Naive thymus-derived CD4-positive, alpha-beta T cell (primary cell): ENCODE measurements at regions of chr4 and their contacts with region 1.

Region 1: DNA sequence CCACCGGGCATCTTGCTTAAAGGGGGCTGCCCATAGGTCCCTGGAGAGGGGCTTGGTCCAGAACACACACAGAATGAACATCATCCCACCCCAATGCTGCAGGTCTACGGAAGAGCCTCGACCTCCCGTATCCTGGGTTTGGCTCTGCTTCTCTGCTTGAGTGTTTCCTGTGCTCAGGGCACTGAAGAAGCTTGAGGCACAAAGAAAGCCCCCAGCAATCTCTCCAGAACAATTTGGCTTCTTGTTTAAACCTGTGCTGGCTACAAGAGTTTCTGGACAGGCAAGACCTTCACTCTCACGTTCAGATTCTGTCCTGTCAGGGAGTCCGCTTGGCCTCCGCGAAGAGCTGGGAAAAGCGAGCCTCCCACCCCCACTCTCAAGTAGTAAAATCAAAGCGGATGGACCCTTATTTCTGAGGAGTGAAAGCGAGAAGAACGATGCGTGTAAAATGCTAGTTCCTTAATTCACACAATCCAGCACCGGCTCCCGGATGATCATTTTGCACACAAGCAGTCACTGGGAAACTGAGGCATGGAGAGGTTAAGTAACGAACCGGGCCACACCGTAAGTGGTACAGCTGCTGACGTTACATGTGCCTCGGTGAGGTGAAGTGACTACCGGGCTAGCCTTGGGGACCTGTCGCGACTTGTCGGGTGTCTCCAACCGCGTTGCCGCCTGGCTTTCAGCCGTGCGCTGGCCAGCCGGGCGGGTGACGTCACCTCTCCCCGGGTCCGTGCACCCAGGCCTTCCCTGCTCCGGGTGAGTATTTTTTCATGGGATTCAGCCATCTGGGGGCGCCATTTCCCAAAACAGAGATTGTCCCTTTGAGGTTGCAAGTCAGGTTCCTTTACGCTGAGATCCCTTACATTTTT is 3.1 kb upstream of the SFRP2 start:
- DNase-seq: peak in 1 of 9 donors; percentile 22
- ATAC-seq: no peak
- H3K4me3 ChIP-seq: peak overlapping the region; percentile 38
- H3K4me3 Mint-ChIP-seq: peak overlapping the region; percentile 61 to 87 (median 80)
- H3K27ac ChIP-seq: no peak overlapping the region
- H3K27ac Mint-ChIP-seq: no peak overlapping the region
- H3K4me1 ChIP-seq: peaks cover 13 to 37% of the 10 kb centered on the region in 2 donors
- H3K4me1 Mint-ChIP-seq: peaks cover 21 to 62% (median 42%) of the 10 kb centered on the region in 7 donors
- H3K27me3 ChIP-seq: peaks cover 7 to 26% of the 10 kb centered on the region in 2 donors
- H3K27me3 Mint-ChIP-seq: peaks cover 67 to 95% (median 82%) of the 10 kb centered on the region in 5 donors

Region 2: GRCh38 chr4:153153339-153153871 is 638.6 kb before region 1 on chr4:
- CTCF ChIA-PET with region 1: no interaction called
- POLR2A ChIA-PET with region 1: no interaction called
- intact Hi-C with region 1: no loop called
- DNase-seq: peak; percentile 53 to 84 (median 78)
- ATAC-seq: peak; percentile 95
- H3K4me3 ChIP-seq: peak overlapping the region; percentile 81
- H3K4me3 Mint-ChIP-seq: peak overlapping the region; percentile 91 to 96 (median 92)
- H3K27ac ChIP-seq: peak overlapping the region; percentile 69
- H3K27ac Mint-ChIP-seq: peak overlapping the region; percentile 78 to 90 (median 85)
- H3K4me1 ChIP-seq: peaks cover 3 to 12% of the 10 kb centered on the region in 2 donors
- H3K4me1 Mint-ChIP-seq: peaks cover 23 to 42% (median 38%) of the 10 kb centered on the region in 7 donors
- H3K27me3 ChIP-seq: no peaks in the 10 kb centered on the region
- H3K27me3 Mint-ChIP-seq: peaks cover 0 to 43% (median 0%) of the 10 kb centered on the region in 5 donors

Region 3: DNA sequence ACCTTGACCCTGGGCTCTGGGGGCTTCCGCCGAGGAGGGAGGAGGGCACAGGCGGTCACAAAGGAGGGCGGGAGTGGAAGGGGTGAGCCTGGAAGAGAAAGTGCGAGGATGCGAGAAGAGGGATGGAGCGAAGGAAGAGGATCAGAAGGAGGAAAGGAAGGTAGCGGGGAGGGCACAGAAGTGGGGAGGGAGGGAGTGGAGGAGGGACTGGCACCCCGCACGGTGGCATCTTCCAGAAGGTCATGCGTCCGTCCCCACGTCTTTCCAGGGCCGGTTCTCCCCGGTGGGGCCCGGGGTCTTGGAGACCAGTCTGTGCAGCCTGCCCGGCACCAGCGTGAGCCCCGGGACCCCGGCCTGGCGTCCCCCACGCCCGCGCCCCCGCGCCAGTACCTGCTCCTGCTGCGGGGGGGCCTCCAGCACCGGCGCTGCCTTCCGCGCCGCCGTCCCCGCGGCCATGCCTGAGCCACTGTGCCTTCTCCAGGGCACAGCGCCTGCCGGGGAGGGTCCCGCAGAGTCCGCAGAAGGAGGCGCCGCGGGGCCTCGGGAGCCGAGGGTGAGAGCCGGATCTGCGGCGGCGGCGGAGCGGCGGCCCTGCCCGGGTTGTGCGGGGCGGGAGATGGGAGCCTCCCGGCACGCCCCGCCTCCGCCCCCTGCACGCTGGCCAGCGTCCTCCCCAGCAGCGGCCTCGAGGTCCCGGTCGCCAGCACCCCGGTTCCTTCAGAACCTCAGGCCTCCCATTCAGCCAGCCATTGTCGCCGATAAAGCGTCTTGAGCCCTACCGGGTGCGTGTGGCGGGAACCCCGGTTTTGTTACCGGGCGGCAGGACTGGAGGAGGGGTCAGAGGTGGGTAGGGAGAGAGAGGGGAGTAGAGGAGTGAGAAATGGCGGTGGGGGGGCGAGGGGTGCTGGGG is 32.3 kb before region 1 on chr4 and contains the start of gene RNF175:
- CTCF ChIA-PET with region 1: interaction called, 3 read pairs
- POLR2A ChIA-PET with region 1: no interaction called
- intact Hi-C with region 1: loop called in 1 of 2 experiments (anchors 2 kb)
- DNase-seq: peak in 8 of 9 donors; percentile 20 to 32 (median 29)
- ATAC-seq: peak; percentile 54
- H3K4me3 ChIP-seq: peak within 1 kb of the TSS; percentile 34
- H3K4me3 Mint-ChIP-seq: peak within 1 kb of the TSS; percentile 40 to 91 (median 84)
- H3K27ac ChIP-seq: peak within 1 kb of the TSS; percentile 54
- H3K27ac Mint-ChIP-seq: peak within 1 kb of the TSS in 8 of 9 donors; percentile 75 to 95 (median 90)
- H3K4me1 ChIP-seq: peaks cover 0 to 26% of the 10 kb centered on the region in 2 donors
- H3K4me1 Mint-ChIP-seq: peaks cover 6 to 74% (median 61%) of the 10 kb centered on the region in 7 donors
- H3K27me3 ChIP-seq: no peaks in the 10 kb centered on the region
- H3K27me3 Mint-ChIP-seq: peaks cover 0 to 71% (median 14%) of the 10 kb centered on the region in 5 donors
- total RNA-seq, gene RNF175: 6.4 to 11.1 (median 8.4) TPM in 4 of 5 experiments, not detected in the other

Region 4: GRCh38 chr4:153809307-153809706 is 17.3 kb after region 1 on chr4:
- CTCF ChIA-PET with region 1: interaction called, 5 read pairs
- POLR2A ChIA-PET with region 1: no interaction called
- intact Hi-C with region 1: loop called in 1 of 2 experiments (anchors 2 kb)
- DNase-seq: peak in 7 of 9 donors; percentile 50 to 84 (median 78)
- ATAC-seq: peak; percentile 93
- H3K4me3 ChIP-seq: no peak overlapping the region
- H3K4me3 Mint-ChIP-seq: peak overlapping the region in 8 of 10 donors; percentile 11 to 52 (median 30)
- H3K27ac ChIP-seq: no peak overlapping the region
- H3K27ac Mint-ChIP-seq: peak overlapping the region in 4 of 9 donors; percentile 3 to 65 (median 12)
- H3K4me1 ChIP-seq: peaks cover 14 to 18% of the 10 kb centered on the region in 2 donors
- H3K4me1 Mint-ChIP-seq: peaks cover 13 to 38% (median 31%) of the 10 kb centered on the region in 7 donors
- H3K27me3 ChIP-seq: no peaks in the 10 kb centered on the region
- H3K27me3 Mint-ChIP-seq: peaks cover 0 to 13% (median 0%) of the 10 kb centered on the region in 5 donors